ENCODE measurements at regions of chr13 and their contacts with region 1.

Region 1: GRCh38 chr13:74778946-74779345 is 644.7 kb upstream of the KLF12 start:
- DNase-seq: no peak
- ATAC-seq: no peak
- H3K4me3 ChIP-seq: no peak overlapping the region
- H3K27ac ChIP-seq: no peak overlapping the region
- H3K4me1 ChIP-seq: no peaks in the 10 kb centered on the region
- H3K27me3 ChIP-seq: no peaks in the 10 kb centered on the region
- CTCF ChIP-seq: no peak
- EP300 ChIP-seq: no peak
- POLR2A ChIP-seq: no peak
- RAD21 ChIP-seq: no peak

Region 2: GRCh38 chr13:74726206-74726605 is 52.7 kb before region 1 on chr13:
- CTCF ChIA-PET with region 1: no interaction called
- POLR2A ChIA-PET with region 1: no interaction called
- RAD21 ChIA-PET with region 1: no interaction called
- SMC1A ChIA-PET with region 1: no interaction called
- in situ Hi-C with region 1: no loop called
- intact Hi-C with region 1: loop called (anchors 5 kb)
- DNase-seq: no peak
- ATAC-seq: no peak
- H3K4me3 ChIP-seq: no peak overlapping the region
- H3K27ac ChIP-seq: no peak overlapping the region
- H3K4me1 ChIP-seq: no peaks in the 10 kb centered on the region
- H3K27me3 ChIP-seq: no peaks in the 10 kb centered on the region
- CTCF ChIP-seq: no peak
- EP300 ChIP-seq: no peak
- POLR2A ChIP-seq: no peak
- RAD21 ChIP-seq: no peak